Esophagus muscularis mucosa (tissue), 4 donors: ENCODE measurements at regions of chr4 and their contacts with region 1.

Region 1: DNA sequence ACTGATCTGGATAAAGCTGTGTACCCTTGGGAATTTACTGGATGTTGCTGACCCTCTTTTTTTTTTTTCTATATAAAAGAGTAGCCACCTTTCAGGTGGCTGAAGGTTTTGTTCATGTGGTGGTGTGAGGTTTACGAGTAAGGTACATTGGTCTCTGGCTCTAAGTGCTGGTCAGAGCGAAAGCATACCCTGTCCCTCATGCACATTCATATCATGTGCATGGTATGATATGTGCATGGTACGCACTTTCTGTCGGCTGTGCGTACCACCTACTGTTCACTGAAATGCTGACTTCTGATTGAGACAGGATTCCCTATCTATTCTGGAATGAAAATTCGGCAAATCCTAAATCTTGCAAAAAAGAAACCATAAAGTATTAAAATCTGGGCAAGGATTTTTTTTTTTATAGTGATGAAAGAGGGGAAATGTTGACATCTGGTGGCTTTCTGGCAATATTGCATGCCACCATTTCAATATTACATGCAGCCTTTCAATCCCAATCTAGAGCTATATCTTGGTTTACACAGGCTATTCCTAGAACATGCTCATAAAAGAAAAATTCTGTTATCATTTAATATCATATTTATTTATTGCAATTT is 32.8 kb downstream of the FAM149A start:
- DNase-seq: peak; percentile 19
- H3K4me3 ChIP-seq: peak overlapping the region in 2 of 4 donors; percentile 16 to 40
- H3K27ac ChIP-seq: no peak overlapping the region
- H3K4me1 ChIP-seq: peaks cover 0 to 17% (median 5%) of the 10 kb centered on the region in 4 donors
- H3K27me3 ChIP-seq: no peaks in the 10 kb centered on the region
- CTCF ChIP-seq: peak; percentile 77 to 81 (median 80)
- EP300 ChIP-seq: no peak
- POLR2A ChIP-seq: no peak

Region 2: GRCh38 chr4:185656467-185656931 is 480.8 kb before region 1 on chr4:
- intact Hi-C with region 1: loop called (anchors 10 kb)
- DNase-seq: no peak
- H3K4me3 ChIP-seq: peak overlapping the region; percentile 52 to 70 (median 58)
- H3K27ac ChIP-seq: peak overlapping the region; percentile 75 to 79 (median 78)
- H3K4me1 ChIP-seq: peaks cover 12 to 40% (median 20%) of the 10 kb centered on the region in 4 donors
- H3K27me3 ChIP-seq: no peaks in the 10 kb centered on the region
- CTCF ChIP-seq: peak; percentile 48 to 74 (median 66)
- EP300 ChIP-seq: no peak
- POLR2A ChIP-seq: no peak

Region 3: GRCh38 chr4:186067757-186068385 is 69.4 kb before region 1 on chr4:
- intact Hi-C with region 1: loop called (anchors 2 kb)
- DNase-seq: no peak
- H3K4me3 ChIP-seq: peak overlapping the region; percentile 54 to 65 (median 62)
- H3K27ac ChIP-seq: peak overlapping the region; percentile 69 to 72 (median 71)
- H3K4me1 ChIP-seq: peaks cover 6 to 18% (median 14%) of the 10 kb centered on the region in 4 donors
- H3K27me3 ChIP-seq: no peaks in the 10 kb centered on the region
- CTCF ChIP-seq: peak; percentile 61 to 68 (median 61)
- EP300 ChIP-seq: no peak
- POLR2A ChIP-seq: no peak